ENCODE measurements at regions of chr18 and their contacts with region 1.

Region 1: DNA sequence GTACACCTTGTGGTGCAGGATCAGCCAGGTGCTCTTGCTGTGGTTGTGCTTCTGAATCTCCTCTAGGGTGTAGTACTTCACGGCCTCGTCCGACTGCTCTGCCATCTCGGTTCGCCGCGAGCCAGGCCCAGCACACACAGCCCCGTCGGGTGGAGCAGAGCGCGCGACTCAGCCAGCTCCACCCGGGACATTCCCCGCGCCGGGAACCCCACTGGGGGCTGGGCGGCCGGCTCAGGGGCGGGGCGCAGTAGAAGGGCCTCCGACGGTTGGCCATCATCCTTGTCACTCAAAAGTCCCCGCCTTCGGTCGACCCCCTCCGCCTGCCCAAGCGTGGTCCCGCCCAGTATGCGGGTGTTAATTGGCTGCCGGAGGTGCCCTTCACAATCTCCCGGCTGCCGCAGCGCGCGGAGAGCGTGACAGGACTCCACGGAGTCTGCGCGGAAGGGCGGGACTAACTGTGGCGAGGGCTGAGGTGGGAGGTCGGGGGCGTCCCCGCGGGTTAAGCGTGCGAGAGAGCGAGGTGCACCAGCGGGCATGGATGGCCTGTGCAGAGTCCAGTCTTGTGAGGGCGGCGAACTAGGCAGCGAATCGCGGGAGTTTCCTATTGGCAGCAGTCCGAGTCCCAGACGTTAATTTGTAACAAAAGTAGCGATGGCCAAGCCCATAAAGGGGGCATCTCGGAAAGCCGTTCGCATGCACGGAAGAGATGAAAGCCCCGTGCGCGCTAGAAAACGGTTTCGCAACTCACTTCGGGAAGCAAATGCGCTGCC is at the start of gene CYB5A:
- DNase-seq: peak; percentile 97 to 99 (median 98)
- ATAC-seq: peak; percentile 99
- H3K4me3 ChIP-seq: peak within 1 kb of the TSS; percentile 91
- H3K4me3 Mint-ChIP-seq: peak within 1 kb of the TSS in 2 of 10 donors; percentile 92 to 94
- H3K27ac ChIP-seq: peak within 1 kb of the TSS; percentile 72
- H3K27ac Mint-ChIP-seq: peak within 1 kb of the TSS in 8 of 9 donors; percentile 56 to 95 (median 87)
- H3K4me1 ChIP-seq: peaks cover 0 to 3% of the 10 kb centered on the region in 2 donors
- H3K4me1 Mint-ChIP-seq: peaks cover 0 to 30% (median 15%) of the 10 kb centered on the region in 7 donors
- H3K27me3 ChIP-seq: no peaks in the 10 kb centered on the region
- H3K27me3 Mint-ChIP-seq: peaks cover 0 to 12% (median 0%) of the 10 kb centered on the region in 5 donors
- total RNA-seq, gene CYB5A: 13.9 to 36.9 (median 22.6) TPM

Region 2: GRCh38 chr18:74050807-74051206 is 241.1 kb before region 1 on chr18:
- CTCF ChIA-PET with region 1: no interaction called
- POLR2A ChIA-PET with region 1: no interaction called
- intact Hi-C with region 1: no loop called
- DNase-seq: no peak
- ATAC-seq: no peak
- H3K4me3 ChIP-seq: no peak overlapping the region
- H3K4me3 Mint-ChIP-seq: no peak overlapping the region
- H3K27ac ChIP-seq: no peak overlapping the region
- H3K27ac Mint-ChIP-seq: no peak overlapping the region
- H3K4me1 ChIP-seq: no peaks in the 10 kb centered on the region
- H3K4me1 Mint-ChIP-seq: peaks cover 0 to 4% (median 0%) of the 10 kb centered on the region in 7 donors
- H3K27me3 ChIP-seq: no peaks in the 10 kb centered on the region
- H3K27me3 Mint-ChIP-seq: peaks cover 0 to 10% (median 0%) of the 10 kb centered on the region in 5 donors

Region 3: DNA sequence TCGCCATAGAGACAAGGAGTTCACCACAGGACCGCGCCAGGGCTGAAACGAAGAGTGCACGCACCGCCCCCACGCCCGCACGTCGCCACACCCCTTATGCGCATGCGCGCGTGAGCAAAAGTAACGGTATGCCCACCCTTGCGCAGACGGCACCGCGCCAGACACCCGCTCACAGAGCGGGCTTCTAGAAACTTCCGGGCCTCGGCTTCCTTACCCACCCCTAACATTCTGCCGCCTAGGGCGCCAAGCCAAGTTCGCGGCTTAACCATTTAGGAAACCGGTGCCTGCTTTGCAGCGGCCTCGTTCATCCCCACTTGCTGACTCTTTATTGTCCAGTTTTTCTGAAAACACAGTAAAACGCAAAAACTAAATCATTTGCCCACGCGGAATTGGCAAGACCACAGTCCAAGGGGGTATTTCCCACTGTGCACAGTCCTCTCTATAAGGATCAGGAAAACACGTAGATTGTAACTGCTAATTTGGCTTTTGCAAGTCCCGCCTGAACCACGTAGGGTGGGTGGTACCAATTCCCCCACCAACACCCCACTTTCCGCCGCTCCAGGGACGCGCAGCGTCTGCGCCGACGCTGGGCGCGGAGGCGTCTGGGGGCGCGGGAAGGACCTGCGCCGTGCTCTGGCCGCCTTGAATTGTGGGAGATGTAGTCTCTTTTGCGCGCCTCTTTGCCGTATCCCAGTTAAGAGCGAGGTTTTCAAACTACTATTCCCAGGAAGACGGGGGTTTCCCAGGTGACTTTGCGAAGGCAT is 144.0 kb before region 1 on chr18 and contains the starts of genes FBXO15 and TIMM21:
- CTCF ChIA-PET with region 1: no interaction called
- POLR2A ChIA-PET with region 1: no interaction called
- intact Hi-C with region 1: loop called (anchors 1 kb)
- DNase-seq: peak; percentile 92 to 97 (median 96)
- ATAC-seq: peak; percentile 91
- H3K4me3 ChIP-seq: peak within 1 kb of the TSS; percentile 82
- H3K4me3 Mint-ChIP-seq: peak within 1 kb of the TSS; percentile 95 to 100 (median 97)
- H3K27ac ChIP-seq: peak within 1 kb of the TSS; percentile 92
- H3K27ac Mint-ChIP-seq: peak within 1 kb of the TSS; percentile 98 to 100 (median 99)
- H3K4me1 ChIP-seq: peaks cover 15 to 25% of the 10 kb centered on the region in 2 donors
- H3K4me1 Mint-ChIP-seq: peaks cover 23 to 60% (median 55%) of the 10 kb centered on the region in 7 donors
- H3K27me3 ChIP-seq: no peaks in the 10 kb centered on the region
- H3K27me3 Mint-ChIP-seq: peaks cover 0 to 7% (median 0%) of the 10 kb centered on the region in 5 donors
- total RNA-seq, gene FBXO15: 1.1 to 4.9 (median 1.3) TPM
- total RNA-seq, gene TIMM21: 9.7 to 30.2 (median 27.9) TPM

Region 4: DNA sequence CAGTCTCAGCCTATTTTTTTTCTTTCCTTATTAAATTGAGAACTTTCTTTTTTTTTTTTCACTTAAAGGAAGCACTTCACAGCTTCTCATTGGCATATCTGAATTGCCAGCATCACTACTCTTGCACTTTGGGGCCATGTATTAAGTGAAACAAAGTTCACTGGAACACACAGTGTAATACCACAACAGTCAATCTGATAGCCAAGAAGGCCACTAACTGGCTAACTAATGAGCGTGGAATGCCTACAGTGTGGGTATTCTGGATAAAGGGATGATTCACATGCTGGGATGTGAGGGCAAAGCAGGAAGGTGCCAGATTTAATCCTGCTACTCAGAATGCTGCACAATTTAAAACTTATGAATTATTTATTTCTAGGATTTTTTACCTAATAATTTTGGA is 12.0 kb after region 1 on chr18:
- CTCF ChIA-PET with region 1: no interaction called
- POLR2A ChIA-PET with region 1: no interaction called
- intact Hi-C with region 1: loop called in 1 of 2 experiments (anchors 2 kb)
- DNase-seq: no peak
- ATAC-seq: no peak
- H3K4me3 ChIP-seq: no peak overlapping the region
- H3K4me3 Mint-ChIP-seq: no peak overlapping the region
- H3K27ac ChIP-seq: no peak overlapping the region
- H3K27ac Mint-ChIP-seq: no peak overlapping the region
- H3K4me1 ChIP-seq: no peaks in the 10 kb centered on the region
- H3K4me1 Mint-ChIP-seq: no peaks in the 10 kb centered on the region
- H3K27me3 ChIP-seq: no peaks in the 10 kb centered on the region
- H3K27me3 Mint-ChIP-seq: peaks cover 10 to 67% (median 31%) of the 10 kb centered on the region in 5 donors

Region 5: GRCh38 chr18:74370115-74370514 is 78.2 kb after region 1 on chr18:
- CTCF ChIA-PET with region 1: no interaction called
- POLR2A ChIA-PET with region 1: no interaction called
- intact Hi-C with region 1: loop called in 1 of 2 experiments (anchors 1 kb)
- DNase-seq: no peak
- ATAC-seq: no peak
- H3K4me3 ChIP-seq: no peak overlapping the region
- H3K4me3 Mint-ChIP-seq: peak overlapping the region in 3 of 10 donors; percentile 8 to 30 (median 30)
- H3K27ac ChIP-seq: no peak overlapping the region
- H3K27ac Mint-ChIP-seq: peak overlapping the region in 3 of 9 donors; percentile 42 to 88 (median 55)
- H3K4me1 ChIP-seq: peaks cover 22 to 54% of the 10 kb centered on the region in 2 donors
- H3K4me1 Mint-ChIP-seq: peaks cover 26 to 72% (median 54%) of the 10 kb centered on the region in 7 donors
- H3K27me3 ChIP-seq: peaks cover 0 to 6% of the 10 kb centered on the region in 2 donors
- H3K27me3 Mint-ChIP-seq: peaks cover 0 to 28% (median 0%) of the 10 kb centered on the region in 5 donors

Region 6: GRCh38 chr18:74597662-74598349 is 305.9 kb after region 1 on chr18 and contains the start of gene ZNF407:
- CTCF ChIA-PET with region 1: no interaction called
- POLR2A ChIA-PET with region 1: no interaction called
- intact Hi-C with region 1: loop called (anchors 1 kb)
- DNase-seq: peak; percentile 77 to 94 (median 90)
- ATAC-seq: peak; percentile 84
- H3K4me3 ChIP-seq: peak within 1 kb of the TSS; percentile 100
- H3K4me3 Mint-ChIP-seq: peak within 1 kb of the TSS; percentile 89 to 96 (median 95)
- H3K27ac ChIP-seq: peak within 1 kb of the TSS; percentile 88
- H3K27ac Mint-ChIP-seq: peak within 1 kb of the TSS; percentile 95 to 99 (median 98)
- H3K4me1 ChIP-seq: peaks cover 26 to 27% of the 10 kb centered on the region in 2 donors
- H3K4me1 Mint-ChIP-seq: peaks cover 33 to 74% (median 61%) of the 10 kb centered on the region in 7 donors
- H3K27me3 ChIP-seq: no peaks in the 10 kb centered on the region
- H3K27me3 Mint-ChIP-seq: no peaks in the 10 kb centered on the region
- total RNA-seq, gene ZNF407: 23.1 to 31.3 (median 29.7) TPM

Measured in naive thymus-derived CD4-positive, alpha-beta T cell (primary cell).